K562 (cell line): ENCODE measurements at regions of chr22 and their contacts with region 1.

Region 1: GRCh38 chr22:50576070-50576469 is 2.2 kb downstream of the CPT1B start:
- DNase-seq: peak; percentile 34 to 79 (median 52)
- ATAC-seq: peak; percentile 93
- H3K4me3 ChIP-seq: no peak overlapping the region
- H3K27ac ChIP-seq: no peak overlapping the region
- H3K4me1 ChIP-seq: peaks cover 0 to 10% of the 10 kb centered on the region in 2 experiments; a peak in 2 of 5 replicates
- H3K27me3 ChIP-seq: no peaks in the 10 kb centered on the region
- CTCF ChIP-seq: peak; percentile 86 to 99 (median 99)
- EP300 ChIP-seq: no peak
- POLR2A ChIP-seq: no peak
- RAD21 ChIP-seq: peak; percentile 86 to 95

Region 2: GRCh38 chr22:50612528-50613221 is 36.6 kb after region 1 on chr22:
- CTCF ChIA-PET with region 1: no interaction called
- POLR2A ChIA-PET with region 1: no interaction called
- in situ Hi-C with region 1: loop called (anchors 5 kb)
- intact Hi-C with region 1: no loop called
- DNase-seq: peak; percentile 48 to 88 (median 86)
- ATAC-seq: peak; percentile 93
- H3K4me3 ChIP-seq: no peak overlapping the region
- H3K27ac ChIP-seq: no peak overlapping the region
- H3K4me1 ChIP-seq: peaks cover 13 to 15% of the 10 kb centered on the region in 2 experiments; a peak in 4 of 5 replicates
- H3K27me3 ChIP-seq: peaks cover 12 to 41% of the 10 kb centered on the region in 2 experiments; a peak in 4 of 5 replicates
- CTCF ChIP-seq: no peak
- EP300 ChIP-seq: no peak
- POLR2A ChIP-seq: no peak
- RAD21 ChIP-seq: no peak

Region 3: DNA sequence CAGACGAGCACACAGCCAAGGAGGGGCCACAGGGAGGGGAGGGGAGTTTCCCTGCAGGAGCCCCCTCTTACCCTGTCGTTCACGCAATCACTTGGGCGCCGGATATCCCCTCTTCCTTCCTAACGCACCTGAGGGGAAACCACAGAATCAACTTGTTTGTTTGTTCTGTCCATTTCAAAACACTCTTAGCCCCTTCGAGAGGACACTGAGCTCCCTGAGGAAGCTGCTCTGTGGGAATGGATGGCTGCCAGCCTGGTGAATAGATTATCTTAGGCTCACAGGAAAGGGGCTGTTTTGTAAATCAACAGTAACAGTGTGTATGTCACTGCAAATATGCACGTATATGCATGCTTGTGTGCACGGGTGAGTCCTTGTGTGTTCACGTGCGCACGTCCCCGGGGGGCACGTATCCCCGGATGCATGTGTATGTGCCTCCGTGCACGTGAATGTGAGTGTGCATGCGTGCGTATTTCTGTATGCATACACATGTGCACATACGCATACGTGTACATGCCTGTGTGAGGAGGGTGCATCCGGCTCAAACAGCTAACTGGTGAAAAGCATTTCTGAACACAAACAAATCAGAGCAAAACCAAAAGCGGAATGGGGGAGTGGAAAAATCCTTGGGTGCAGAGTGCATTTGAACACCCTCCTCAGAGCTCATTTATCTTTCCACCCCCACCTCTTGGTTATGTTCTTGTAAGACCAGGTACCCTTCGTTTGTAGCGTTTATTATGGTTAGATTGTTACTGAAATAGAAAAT is 44.7 kb after region 1 on chr22:
- CTCF ChIA-PET with region 1: interaction called, 51 read pairs
- POLR2A ChIA-PET with region 1: interaction called, 4 read pairs
- in situ Hi-C with region 1: no loop called
- intact Hi-C with region 1: loop called (anchors 1 kb)
- DNase-seq: peak in 3 of 4 experiments; percentile 62 to 67 (median 62)
- ATAC-seq: peak; percentile 97
- H3K4me3 ChIP-seq: no peak overlapping the region
- H3K27ac ChIP-seq: no peak overlapping the region
- H3K4me1 ChIP-seq: peaks cover 12% of the 10 kb centered on the region in 2 experiments; a peak in 3 of 5 replicates
- H3K27me3 ChIP-seq: no peaks in the 10 kb centered on the region
- CTCF ChIP-seq: peak in 1 of 3 experiments; percentile 68; a peak in 2 of 6 replicates
- EP300 ChIP-seq: no peak
- POLR2A ChIP-seq: no peak
- RAD21 ChIP-seq: no peak; a peak in 1 of 4 replicates

Region 4: GRCh38 chr22:50691521-50691920 is 115.5 kb after region 1 on chr22:
- CTCF ChIA-PET with region 1: interaction called, 41 read pairs
- POLR2A ChIA-PET with region 1: no interaction called
- in situ Hi-C with region 1: no loop called
- intact Hi-C with region 1: loop called (anchors 1 kb)
- DNase-seq: peak in 2 of 4 experiments; percentile 25 to 43
- ATAC-seq: no peak
- H3K4me3 ChIP-seq: no peak overlapping the region
- H3K27ac ChIP-seq: no peak overlapping the region
- H3K4me1 ChIP-seq: peaks cover 0 to 2% of the 10 kb centered on the region in 2 experiments; a peak in 2 of 5 replicates
- H3K27me3 ChIP-seq: peaks cover 9 to 38% of the 10 kb centered on the region in 2 experiments; a peak in 4 of 5 replicates
- CTCF ChIP-seq: peak; percentile 46 to 72 (median 60); a peak in 4 of 6 replicates
- EP300 ChIP-seq: no peak
- POLR2A ChIP-seq: no peak
- RAD21 ChIP-seq: peak; percentile 52 to 69